Sigmoid colon (tissue), 7 donors: ENCODE measurements at regions of chr12 and their contacts with region 1.

Region 1: GRCh38 chr12:53287741-53288216 is 7.6 kb upstream of the PFDN5 start:
- DNase-seq: peak; percentile 81
- H3K4me3 ChIP-seq: no peak overlapping the region
- H3K27ac ChIP-seq: no peak overlapping the region
- H3K4me1 ChIP-seq: peaks cover 0 to 4% (median 0%) of the 10 kb centered on the region in 4 donors
- H3K27me3 ChIP-seq: no peaks in the 10 kb centered on the region
- CTCF ChIP-seq: peak; percentile 39 to 73 (median 60)
- EP300 ChIP-seq: no peak
- POLR2A ChIP-seq: no peak

Region 2: GRCh38 chr12:53159195-53159839 is 128.5 kb before region 1 on chr12:
- intact Hi-C with region 1: loop called (anchors 2 kb)
- DNase-seq: peak; percentile 92
- H3K4me3 ChIP-seq: no peak overlapping the region
- H3K27ac ChIP-seq: peak overlapping the region in 1 of 4 donors; percentile 80
- H3K4me1 ChIP-seq: peaks cover 0 to 4% (median 4%) of the 10 kb centered on the region in 4 donors
- H3K27me3 ChIP-seq: no peaks in the 10 kb centered on the region
- CTCF ChIP-seq: peak; percentile 93 to 100 (median 98)
- EP300 ChIP-seq: no peak
- POLR2A ChIP-seq: no peak